AG04450 (cell line): ENCODE measurements at regions of chr11 and their contacts with region 1.

Region 1: DNA sequence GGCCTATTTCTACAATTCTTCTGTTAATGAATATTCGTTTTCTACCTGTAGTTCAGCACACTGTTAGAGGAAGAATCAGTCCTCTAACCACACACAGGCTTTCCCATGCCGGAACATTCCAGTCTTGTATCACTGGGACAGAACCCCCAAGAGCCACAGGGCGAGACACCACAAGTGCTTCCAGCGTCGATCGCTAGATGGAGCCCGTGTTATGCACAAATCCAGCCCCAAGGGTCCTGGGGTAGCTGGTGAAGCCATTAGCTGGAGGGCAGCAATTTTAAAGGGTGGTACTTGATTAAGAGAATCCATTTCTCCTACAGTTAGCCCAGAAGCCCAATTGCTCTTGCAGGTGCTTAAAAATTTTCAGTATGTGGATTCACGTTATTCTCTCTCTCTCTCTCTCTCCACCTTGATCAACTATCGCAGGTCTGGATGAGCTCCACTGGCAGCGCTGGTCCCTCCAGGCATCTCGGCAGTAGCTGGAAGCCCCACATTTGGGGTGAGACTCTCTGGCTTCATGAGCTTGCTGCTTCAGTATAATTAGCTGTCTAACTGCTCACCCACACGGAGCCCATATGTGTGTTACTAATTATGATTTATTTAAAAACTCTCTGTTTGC is 148.2 kb upstream of the SNX19 start:
- DNase-seq: peak; percentile 55
- H3K4me3 ChIP-seq: no peak overlapping the region
- H3K27ac ChIP-seq: no peak overlapping the region
- H3K27me3 ChIP-seq: no peaks in the 10 kb centered on the region
- CTCF ChIP-seq: peak; percentile 98

Region 2: GRCh38 chr11:131025020-131025419 is 39.5 kb before region 1 on chr11:
- CTCF ChIA-PET with region 1: interaction called, 13 read pairs
- POLR2A ChIA-PET with region 1: no interaction called
- DNase-seq: peak; percentile 29
- H3K4me3 ChIP-seq: no peak overlapping the region
- H3K27ac ChIP-seq: no peak overlapping the region
- H3K27me3 ChIP-seq: no peaks in the 10 kb centered on the region
- CTCF ChIP-seq: peak; percentile 85

Region 3: DNA sequence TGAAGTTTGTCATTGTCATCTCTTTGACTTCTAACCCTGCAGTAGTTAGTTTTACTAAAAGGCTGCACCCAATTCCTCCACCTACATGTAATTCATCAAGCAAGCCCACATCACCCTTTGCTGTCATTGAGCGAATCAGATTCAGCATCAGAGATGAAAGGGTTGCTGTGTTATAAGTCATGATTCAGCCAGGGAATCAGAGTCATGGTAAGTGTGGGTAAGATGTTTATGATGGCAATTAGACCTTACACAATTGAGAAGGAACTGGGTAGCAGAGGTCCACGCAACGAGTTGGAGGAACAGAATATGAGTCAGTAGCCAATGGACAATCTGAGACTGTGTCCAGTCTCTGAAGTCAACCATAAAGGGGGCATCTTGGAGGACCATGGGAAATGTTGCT is 14.6 kb after region 1 on chr11:
- CTCF ChIA-PET with region 1: interaction called, 26 read pairs
- POLR2A ChIA-PET with region 1: interaction called, 4 read pairs
- DNase-seq: no peak
- H3K4me3 ChIP-seq: no peak overlapping the region
- H3K27ac ChIP-seq: no peak overlapping the region
- H3K27me3 ChIP-seq: no peaks in the 10 kb centered on the region
- CTCF ChIP-seq: no peak

Region 4: DNA sequence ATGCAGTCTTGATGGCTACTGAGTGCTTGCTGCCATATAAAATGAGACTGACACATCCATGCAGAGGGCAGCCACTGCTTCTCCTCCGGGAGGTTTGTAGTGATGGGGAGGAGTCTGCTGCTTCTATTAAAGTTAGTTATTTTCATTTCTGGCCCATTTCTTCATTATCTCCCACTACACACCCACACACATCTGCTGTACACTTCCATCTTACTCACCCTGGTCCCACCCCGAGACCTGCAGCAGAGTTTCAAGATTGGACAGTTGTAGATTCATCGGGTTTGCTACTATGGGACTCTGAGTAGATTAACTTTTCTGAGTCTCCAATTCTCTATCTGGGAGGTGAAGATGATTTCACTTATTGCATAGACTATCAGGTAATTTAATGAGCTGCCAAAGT is 28.0 kb after region 1 on chr11:
- CTCF ChIA-PET with region 1: interaction called, 12 read pairs
- POLR2A ChIA-PET with region 1: no interaction called
- DNase-seq: no peak
- H3K4me3 ChIP-seq: no peak overlapping the region
- H3K27ac ChIP-seq: no peak overlapping the region
- H3K27me3 ChIP-seq: no peaks in the 10 kb centered on the region
- CTCF ChIP-seq: no peak

Region 5: DNA sequence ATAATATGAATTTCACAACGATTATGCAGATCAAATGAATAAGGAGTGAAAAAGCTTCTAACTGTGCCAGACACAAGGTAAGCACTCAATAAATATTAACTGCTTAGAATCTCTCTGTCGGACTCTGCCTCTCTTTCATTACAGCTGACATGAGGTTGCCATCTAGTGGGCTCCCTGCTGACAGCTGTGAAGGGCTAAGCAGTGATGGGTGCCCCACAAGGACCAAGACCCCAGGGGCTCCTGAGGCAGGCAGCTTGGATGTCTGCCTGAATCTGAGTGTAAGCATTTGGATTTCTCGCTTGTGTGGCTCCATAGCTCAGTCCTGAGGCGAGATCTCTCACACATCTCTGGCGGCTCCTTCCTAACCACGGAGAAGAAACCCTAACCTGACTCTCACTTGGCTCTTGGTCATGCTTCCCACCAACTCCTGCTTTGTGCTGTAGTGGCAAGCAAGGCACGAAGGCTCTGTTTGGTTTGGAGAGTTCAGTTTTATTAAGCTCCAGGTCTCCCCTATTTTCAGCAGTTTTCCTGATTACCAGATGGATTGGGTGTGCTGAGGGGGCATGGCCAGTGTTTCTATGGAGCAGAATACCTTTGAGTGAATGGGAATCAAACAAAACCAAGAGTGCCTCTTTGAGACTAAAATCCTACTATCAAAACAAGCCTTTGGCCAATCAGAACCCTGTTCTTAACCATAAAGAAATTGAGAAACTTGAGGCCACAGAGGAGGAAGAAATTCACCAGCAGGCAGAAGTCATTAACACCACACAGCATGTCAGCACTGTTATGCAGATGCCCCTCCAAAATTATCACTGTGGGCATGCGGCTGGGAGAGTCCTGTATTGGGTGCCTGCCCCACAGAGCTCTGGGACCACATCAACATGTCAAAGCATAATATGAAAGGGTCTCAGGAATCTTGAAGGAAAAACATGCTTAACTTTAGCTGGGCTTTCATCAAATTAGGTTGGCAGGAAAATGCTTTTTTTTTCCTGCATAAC is 153.1 kb after region 1 on chr11:
- CTCF ChIA-PET with region 1: interaction called, 67 read pairs
- POLR2A ChIA-PET with region 1: no interaction called
- DNase-seq: peak; percentile 3
- H3K4me3 ChIP-seq: no peak overlapping the region
- H3K27ac ChIP-seq: no peak overlapping the region
- H3K27me3 ChIP-seq: no peaks in the 10 kb centered on the region
- CTCF ChIP-seq: peak; percentile 57

Region 6: DNA sequence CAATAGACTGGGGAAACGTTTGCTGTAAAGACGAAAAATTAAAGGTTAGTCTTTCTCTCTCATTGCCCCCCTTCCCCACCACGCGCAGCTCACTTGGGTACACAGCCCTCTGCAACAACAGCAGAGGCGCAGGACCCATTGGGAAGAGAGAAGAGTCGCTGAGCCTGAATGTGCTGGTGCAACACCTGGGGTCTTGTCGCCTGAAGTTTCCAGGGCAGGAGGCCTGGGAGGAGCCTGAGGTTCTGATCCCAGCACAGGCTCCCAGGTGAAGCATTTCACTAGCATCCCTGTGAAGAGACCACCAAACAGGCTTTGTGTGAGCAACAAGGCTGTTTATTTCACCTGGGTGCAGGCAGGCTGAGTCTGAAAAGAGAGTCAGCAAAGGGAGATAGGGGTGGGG is 189.8 kb after region 1 on chr11:
- CTCF ChIA-PET with region 1: no interaction called
- POLR2A ChIA-PET with region 1: no interaction called
- DNase-seq: no peak
- H3K4me3 ChIP-seq: no peak overlapping the region
- H3K27ac ChIP-seq: no peak overlapping the region
- H3K27me3 ChIP-seq: no peaks in the 10 kb centered on the region
- CTCF ChIP-seq: no peak

Region 7: DNA sequence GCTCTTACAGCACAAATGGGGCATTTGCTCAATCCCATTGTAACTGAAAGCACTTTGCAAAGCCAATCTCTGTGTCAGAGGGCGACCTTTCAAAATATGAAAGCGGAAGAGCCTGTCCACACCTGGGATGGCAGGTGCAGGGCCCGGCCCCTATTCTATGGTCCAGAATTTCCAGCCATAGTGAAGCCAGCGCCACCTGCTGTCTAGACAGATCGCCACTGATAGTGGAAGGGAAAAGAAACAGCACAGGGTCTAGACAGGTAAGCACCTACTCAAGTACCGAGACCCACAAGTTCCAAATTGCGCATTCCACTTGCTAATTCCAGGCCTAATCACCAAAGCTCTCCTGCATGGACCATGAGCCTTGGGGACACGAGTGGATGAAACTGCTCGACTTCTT is 447.3 kb after region 1 on chr11:
- CTCF ChIA-PET with region 1: interaction called, 16 read pairs
- POLR2A ChIA-PET with region 1: no interaction called
- DNase-seq: no peak
- H3K4me3 ChIP-seq: no peak overlapping the region
- H3K27ac ChIP-seq: no peak overlapping the region
- H3K27me3 ChIP-seq: no peaks in the 10 kb centered on the region
- CTCF ChIP-seq: peak; percentile 49

Region 8: GRCh38 chr11:131688051-131688698 is 623.7 kb after region 1 on chr11:
- CTCF ChIA-PET with region 1: interaction called, 10 read pairs
- POLR2A ChIA-PET with region 1: no interaction called
- DNase-seq: no peak
- H3K4me3 ChIP-seq: peak overlapping the region; percentile 46
- H3K27ac ChIP-seq: no peak overlapping the region
- H3K27me3 ChIP-seq: peaks cover 11% of the 10 kb centered on the region
- CTCF ChIP-seq: peak; percentile 89